Activated CD4-positive, alpha-beta T cell treated with anti-CD3 and anti-CD28 coated beads, Interleukin-2, amount 10 ng/mL, durations not matched to agents 24 days and 14 days (primary cell): ENCODE measurements at regions of chr1 and their contacts with region 1.

Region 1: DNA sequence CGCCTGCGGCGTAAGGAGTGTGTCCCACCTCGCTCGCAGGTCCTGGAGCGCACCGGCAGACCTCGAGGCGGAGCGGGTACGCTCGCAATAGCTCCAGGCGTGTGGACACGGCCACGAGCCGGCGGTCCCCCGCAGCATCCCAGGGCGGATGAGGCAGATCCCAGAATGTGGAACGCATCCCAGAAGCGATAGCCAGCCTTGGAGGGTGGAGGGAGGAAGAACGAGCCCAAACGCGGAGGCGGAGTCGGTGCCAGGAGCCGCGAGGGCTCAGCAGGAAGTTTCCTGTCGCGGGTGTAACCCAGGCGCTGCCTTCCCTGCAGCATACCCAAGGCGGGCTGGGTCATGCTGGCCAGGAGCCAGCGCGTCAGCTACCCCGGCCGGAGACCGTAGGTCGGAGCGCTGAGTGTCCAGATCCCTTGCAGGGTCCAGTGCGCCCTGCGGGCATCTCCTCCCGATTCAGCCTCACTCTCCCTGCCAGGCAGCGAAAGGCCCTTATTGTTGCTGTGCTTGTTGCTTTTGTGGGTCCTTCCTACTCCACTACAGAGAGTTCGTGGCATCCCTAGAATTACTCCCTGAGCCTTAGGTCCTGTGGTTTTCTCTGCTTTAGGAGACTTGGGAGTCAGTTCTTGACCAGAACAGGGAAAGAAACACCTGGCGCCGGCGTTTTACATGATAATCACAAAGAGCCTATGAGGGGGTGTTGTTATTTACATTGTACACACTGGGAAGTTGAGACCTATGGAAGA is 27.7 kb downstream of the STYXL2 start:
- DNase-seq: peak; percentile 78
- H3K4me3 Mint-ChIP-seq: peak overlapping the region; percentile 86
- H3K27ac Mint-ChIP-seq: no peak overlapping the region
- H3K4me1 Mint-ChIP-seq: peaks cover 6% of the 10 kb centered on the region
- H3K27me3 Mint-ChIP-seq: peaks cover 7% of the 10 kb centered on the region

Region 2: GRCh38 chr1:167086033-167086432 is 35.5 kb before region 1 on chr1:
- intact Hi-C with region 1: loop called (anchors 5 kb)
- DNase-seq: no peak
- H3K4me3 Mint-ChIP-seq: no peak overlapping the region
- H3K27ac Mint-ChIP-seq: no peak overlapping the region
- H3K4me1 Mint-ChIP-seq: peaks cover 16% of the 10 kb centered on the region
- H3K27me3 Mint-ChIP-seq: peaks cover 4% of the 10 kb centered on the region

Region 3: GRCh38 chr1:167104256-167104633 is 17.3 kb before region 1 on chr1:
- intact Hi-C with region 1: loop called (anchors 2 kb)
- DNase-seq: peak; percentile 67
- H3K4me3 Mint-ChIP-seq: peak overlapping the region; percentile 36
- H3K27ac Mint-ChIP-seq: peak overlapping the region; percentile 48
- H3K4me1 Mint-ChIP-seq: peaks cover 37% of the 10 kb centered on the region
- H3K27me3 Mint-ChIP-seq: peaks cover 5% of the 10 kb centered on the region

Region 4: GRCh38 chr1:167136191-167136614 is 14.7 kb after region 1 on chr1:
- intact Hi-C with region 1: no loop called
- DNase-seq: no peak
- H3K4me3 Mint-ChIP-seq: no peak overlapping the region
- H3K27ac Mint-ChIP-seq: no peak overlapping the region
- H3K4me1 Mint-ChIP-seq: no peaks in the 10 kb centered on the region
- H3K27me3 Mint-ChIP-seq: peaks cover 51% of the 10 kb centered on the region

Region 5: GRCh38 chr1:167152192-167152876 is 30.8 kb after region 1 on chr1:
- intact Hi-C with region 1: no loop called
- DNase-seq: no peak
- H3K4me3 Mint-ChIP-seq: no peak overlapping the region
- H3K27ac Mint-ChIP-seq: no peak overlapping the region
- H3K4me1 Mint-ChIP-seq: no peaks in the 10 kb centered on the region
- H3K27me3 Mint-ChIP-seq: peaks cover 12% of the 10 kb centered on the region